ENCODE measurements at regions of chr2 and their contacts with region 1.

Region 1: DNA sequence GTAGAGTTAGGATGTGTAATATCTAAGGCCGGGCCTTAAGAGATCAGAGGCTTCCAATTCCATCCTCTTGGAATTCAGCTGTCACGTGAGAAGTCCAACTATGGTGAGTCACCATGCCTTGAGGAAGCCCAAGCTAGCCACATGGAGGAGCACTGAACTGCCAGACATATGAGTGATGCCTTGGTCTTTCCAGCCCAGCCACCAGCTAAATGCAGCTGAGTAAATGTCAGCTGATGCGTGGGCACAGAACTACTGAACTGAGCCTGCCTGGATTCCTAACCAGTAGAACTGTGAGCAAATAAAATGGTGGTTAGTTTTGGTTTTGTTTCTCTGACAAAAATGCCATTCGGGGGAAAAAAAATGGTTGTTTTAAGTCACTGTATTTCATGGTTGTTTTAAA is 153.7 kb upstream of the SERTAD2 start:
- DNase-seq: peak; percentile 89
- H3K4me3 ChIP-seq: no peak overlapping the region
- H3K27ac ChIP-seq: no peak overlapping the region
- H3K4me1 ChIP-seq: peaks cover 15% of the 10 kb centered on the region
- H3K27me3 ChIP-seq: no peaks in the 10 kb centered on the region
- CTCF ChIP-seq: peak in 1 of 2 donors; percentile 1
- POLR2A ChIP-seq: no peak

Region 2: GRCh38 chr2:64786343-64787015 is 20.9 kb before region 1 on chr2:
- CTCF ChIA-PET with region 1: no interaction called
- POLR2A ChIA-PET with region 1: no interaction called
- dilution Hi-C with region 1: no loop called
- intact Hi-C with region 1: no loop called
- DNase-seq: no peak
- H3K4me3 ChIP-seq: no peak overlapping the region
- H3K27ac ChIP-seq: no peak overlapping the region
- H3K4me1 ChIP-seq: peaks cover 9% of the 10 kb centered on the region
- H3K27me3 ChIP-seq: no peaks in the 10 kb centered on the region
- CTCF ChIP-seq: no peak
- POLR2A ChIP-seq: no peak

Region 3: GRCh38 chr2:64859312-64860212 is 52.1 kb after region 1 on chr2:
- CTCF ChIA-PET with region 1: interaction called, 4 read pairs
- POLR2A ChIA-PET with region 1: no interaction called
- dilution Hi-C with region 1: no loop called
- intact Hi-C with region 1: loop called (anchors 1 kb)
- DNase-seq: peak; percentile 76
- H3K4me3 ChIP-seq: peak overlapping the region in 2 of 3 experiments; percentile 24 to 34
- H3K27ac ChIP-seq: peak overlapping the region; percentile 66
- H3K4me1 ChIP-seq: peaks cover 17% of the 10 kb centered on the region
- H3K27me3 ChIP-seq: no peaks in the 10 kb centered on the region
- CTCF ChIP-seq: peak in 1 of 2 donors; percentile 22
- POLR2A ChIP-seq: no peak